ENCODE measurements at regions of chr5 and their contacts with region 1.

Region 1: GRCh38 chr5:36897616-36898015 is 21.0 kb downstream of the NIPBL start:
- DNase-seq: no peak
- ATAC-seq: no peak
- H3K4me3 ChIP-seq: no peak overlapping the region
- H3K4me3 Mint-ChIP-seq: peak overlapping the region in 7 of 10 donors; percentile 7 to 64 (median 30)
- H3K27ac ChIP-seq: no peak overlapping the region
- H3K27ac Mint-ChIP-seq: peak overlapping the region in 1 of 9 donors; percentile 2
- H3K4me1 ChIP-seq: peaks cover 8 to 12% of the 10 kb centered on the region in 2 donors
- H3K4me1 Mint-ChIP-seq: peaks cover 37 to 90% (median 81%) of the 10 kb centered on the region in 7 donors
- H3K27me3 ChIP-seq: no peaks in the 10 kb centered on the region
- H3K27me3 Mint-ChIP-seq: no peaks in the 10 kb centered on the region

Region 2: GRCh38 chr5:36790838-36791237 is 106.8 kb before region 1 on chr5:
- CTCF ChIA-PET with region 1: no interaction called
- POLR2A ChIA-PET with region 1: no interaction called
- intact Hi-C with region 1: no loop called
- DNase-seq: no peak
- ATAC-seq: no peak
- H3K4me3 ChIP-seq: no peak overlapping the region
- H3K4me3 Mint-ChIP-seq: no peak overlapping the region
- H3K27ac ChIP-seq: no peak overlapping the region
- H3K27ac Mint-ChIP-seq: no peak overlapping the region
- H3K4me1 ChIP-seq: no peaks in the 10 kb centered on the region
- H3K4me1 Mint-ChIP-seq: no peaks in the 10 kb centered on the region
- H3K27me3 ChIP-seq: peaks cover 0 to 3% of the 10 kb centered on the region in 2 donors
- H3K27me3 Mint-ChIP-seq: peaks cover 3 to 24% (median 18%) of the 10 kb centered on the region in 5 donors

Region 3: DNA sequence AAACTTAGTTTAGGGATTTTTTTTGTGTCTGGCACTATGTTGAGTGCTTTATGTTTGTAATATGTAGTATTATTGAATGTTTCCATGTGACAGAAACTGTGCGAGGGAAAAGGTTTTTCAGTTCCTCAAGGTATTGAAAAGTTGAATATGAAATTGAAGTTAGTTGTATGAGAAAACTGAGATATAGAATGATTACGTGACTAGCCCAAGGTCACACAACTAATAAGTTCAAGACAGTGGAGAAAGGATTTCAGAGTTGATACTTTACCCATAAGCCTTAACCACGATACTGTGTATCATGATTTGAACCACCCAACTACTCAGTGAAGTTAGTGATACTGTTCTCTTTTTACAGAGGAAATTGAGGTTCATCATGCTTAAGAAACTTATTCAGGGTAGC is 15.4 kb before region 1 on chr5:
- CTCF ChIA-PET with region 1: interaction called, 4 read pairs
- POLR2A ChIA-PET with region 1: interaction called, 8 read pairs
- intact Hi-C with region 1: loop called in 1 of 2 experiments (anchors 1 kb)
- DNase-seq: no peak
- ATAC-seq: no peak
- H3K4me3 ChIP-seq: no peak overlapping the region
- H3K4me3 Mint-ChIP-seq: peak overlapping the region in 8 of 10 donors; percentile 50 to 96 (median 60)
- H3K27ac ChIP-seq: no peak overlapping the region
- H3K27ac Mint-ChIP-seq: peak overlapping the region in 4 of 9 donors; percentile 0 to 60 (median 20)
- H3K4me1 ChIP-seq: peaks cover 29 to 50% of the 10 kb centered on the region in 2 donors
- H3K4me1 Mint-ChIP-seq: peaks cover 50 to 85% (median 75%) of the 10 kb centered on the region in 7 donors
- H3K27me3 ChIP-seq: no peaks in the 10 kb centered on the region
- H3K27me3 Mint-ChIP-seq: no peaks in the 10 kb centered on the region

Measured in naive thymus-derived CD4-positive, alpha-beta T cell (primary cell).